AG04449 (cell line): ENCODE measurements at regions of chr2 and their contacts with region 1.

Region 1: DNA sequence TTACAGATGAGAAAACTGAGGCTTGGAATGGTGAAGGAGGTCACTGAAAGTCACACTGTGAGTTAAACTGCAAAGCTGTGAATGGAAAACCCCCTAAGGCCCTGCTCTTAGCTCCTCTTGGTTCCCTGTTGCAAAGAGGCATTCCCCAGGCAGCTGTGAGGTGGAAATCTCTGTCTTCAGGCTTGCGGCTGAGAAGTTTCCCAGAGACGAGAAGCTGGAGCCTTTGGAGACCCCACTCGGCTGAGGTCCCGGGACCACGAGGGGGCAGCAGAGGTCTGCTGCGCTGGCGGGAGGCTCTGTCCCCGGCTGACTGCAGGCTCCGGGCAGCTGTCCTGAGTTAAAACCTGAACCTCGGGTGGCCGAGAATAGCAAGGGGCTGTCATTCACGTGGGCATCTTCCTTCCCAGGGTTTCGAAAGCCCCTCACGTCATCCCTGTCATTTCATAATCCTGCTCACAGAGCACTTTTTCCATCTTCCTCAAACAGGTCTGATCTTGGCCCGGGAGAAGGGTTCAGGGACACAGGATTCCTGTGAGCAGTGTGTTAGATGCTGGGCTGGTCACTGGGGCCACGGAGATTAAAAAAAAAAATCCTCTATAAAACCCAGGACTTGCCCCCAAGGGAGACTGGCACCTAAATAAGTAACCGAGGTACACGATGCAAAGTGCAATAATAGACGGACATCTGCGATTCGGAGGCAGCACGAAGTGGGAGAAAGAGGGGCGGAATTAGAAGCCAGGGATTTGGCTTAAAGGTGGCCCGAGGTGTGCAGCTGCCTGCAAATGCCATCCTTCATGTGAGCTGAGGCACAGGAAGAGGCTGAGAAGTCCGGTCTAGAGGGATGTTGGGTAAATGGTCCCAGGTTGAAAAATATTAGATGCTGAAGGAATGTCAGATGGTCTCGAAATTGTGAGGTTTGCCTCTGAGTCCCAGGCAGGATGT is 24.6 kb upstream of the ATOH8 start:
- DNase-seq: no peak
- H3K4me3 ChIP-seq: no peak overlapping the region
- CTCF ChIP-seq: peak; percentile 98

Region 2: DNA sequence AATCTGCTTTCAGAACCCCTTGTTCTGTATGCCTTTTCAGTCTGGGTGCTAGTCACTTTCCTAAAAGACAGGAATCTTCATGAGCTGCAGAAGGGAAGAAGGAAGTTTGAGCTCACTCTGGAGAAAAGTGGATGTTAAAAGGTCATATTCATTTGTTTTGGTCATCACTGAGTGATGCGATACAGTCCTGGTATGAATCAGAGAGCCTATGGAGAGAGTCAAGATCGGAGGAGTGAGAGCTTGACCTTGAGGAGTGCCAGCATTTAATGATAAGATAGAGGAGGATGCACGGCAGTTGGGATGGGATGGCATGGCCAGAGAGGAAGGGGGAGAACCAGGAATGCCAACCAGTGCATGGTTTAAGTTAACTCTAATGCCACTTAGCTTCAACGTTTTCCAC is 93.5 kb before region 1 on chr2:
- CTCF ChIA-PET with region 1: interaction called, 915 read pairs
- POLR2A ChIA-PET with region 1: no interaction called
- DNase-seq: no peak
- H3K4me3 ChIP-seq: no peak overlapping the region
- CTCF ChIP-seq: no peak

Region 3: DNA sequence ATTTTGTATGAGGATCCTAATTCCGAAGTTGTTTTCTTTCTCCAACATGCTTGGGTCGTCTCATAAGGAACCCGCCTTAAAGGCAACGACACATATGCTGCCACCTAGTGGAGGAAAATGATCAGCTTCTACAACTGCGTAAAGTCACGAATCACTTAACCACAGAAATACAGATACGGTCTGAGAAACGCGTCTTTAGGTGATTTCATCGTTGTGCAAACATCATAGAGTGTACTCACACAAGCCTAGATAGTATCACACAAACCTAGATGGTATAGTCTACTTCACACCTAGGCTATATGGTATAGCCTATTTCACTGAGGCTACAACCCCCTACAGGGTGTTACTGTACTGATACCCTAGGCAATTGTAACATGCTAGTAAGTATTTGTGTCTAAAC is 21.9 kb before region 1 on chr2:
- CTCF ChIA-PET with region 1: interaction called, 221 read pairs
- POLR2A ChIA-PET with region 1: no interaction called
- DNase-seq: no peak
- H3K4me3 ChIP-seq: no peak overlapping the region
- CTCF ChIP-seq: peak; percentile 76

Region 4: DNA sequence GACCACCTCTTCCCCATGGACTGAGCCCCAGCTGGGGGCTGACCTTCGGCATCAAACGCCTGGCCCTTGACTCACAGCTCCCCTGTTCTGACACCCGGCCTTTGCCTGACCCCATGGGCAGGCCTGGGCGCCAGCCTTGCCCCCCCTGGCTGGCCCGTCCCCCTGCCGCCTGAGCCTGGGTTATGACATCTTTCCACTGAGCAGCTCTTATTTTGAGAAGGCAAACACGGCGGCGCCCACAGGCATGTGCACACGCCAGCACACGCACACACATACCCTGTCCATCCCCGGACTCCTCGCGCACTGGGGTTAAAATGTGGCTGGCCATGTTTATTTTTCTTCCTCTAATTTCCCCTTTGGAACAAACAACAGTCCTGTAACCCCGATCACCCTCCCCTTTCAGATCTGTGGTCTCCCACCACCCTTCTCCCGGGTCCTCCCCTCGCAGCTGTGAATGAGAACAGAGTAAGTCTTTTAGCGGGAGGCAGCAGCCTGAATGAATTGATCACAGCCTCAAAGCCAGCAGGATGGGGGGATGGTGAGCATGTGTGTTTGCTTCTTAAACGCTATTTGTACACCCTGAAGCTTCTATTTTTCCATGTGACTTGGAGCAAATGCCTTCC is 12.8 kb after region 1 on chr2:
- CTCF ChIA-PET with region 1: interaction called, 143 read pairs
- POLR2A ChIA-PET with region 1: interaction called, 3 read pairs
- DNase-seq: peak; percentile 88
- H3K4me3 ChIP-seq: peak overlapping the region; percentile 23
- CTCF ChIP-seq: no peak

Region 5: DNA sequence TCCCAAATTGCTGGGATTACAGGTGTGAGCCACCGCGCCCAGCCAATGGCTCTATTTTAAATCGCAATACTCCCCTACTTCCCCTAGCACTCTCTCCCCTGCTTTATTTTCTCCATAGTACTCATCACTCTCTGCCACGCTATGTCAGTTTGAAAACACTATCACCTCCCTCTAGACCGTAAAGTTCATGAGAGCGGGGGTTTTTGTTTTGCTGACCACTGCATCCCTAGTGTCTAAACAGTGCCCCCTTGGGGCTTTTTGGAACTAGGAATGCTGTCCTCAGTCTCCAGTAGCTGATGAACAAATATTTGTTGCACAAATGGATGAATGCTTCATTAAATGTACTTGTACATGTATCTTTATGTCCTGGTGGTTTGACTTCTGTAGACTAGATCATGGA is 68.8 kb after region 1 on chr2:
- CTCF ChIA-PET with region 1: interaction called, 643 read pairs
- POLR2A ChIA-PET with region 1: no interaction called
- DNase-seq: no peak
- H3K4me3 ChIP-seq: no peak overlapping the region
- CTCF ChIP-seq: peak; percentile 43